ENCODE measurements at regions of chr9 and their contacts with region 1.

Region 1: GRCh38 chr9:4762108-4762885 is 21.3 kb upstream of the AK3 start:
- DNase-seq: peak in 9 of 10 donors; percentile 37 to 94 (median 75)

Region 2: DNA sequence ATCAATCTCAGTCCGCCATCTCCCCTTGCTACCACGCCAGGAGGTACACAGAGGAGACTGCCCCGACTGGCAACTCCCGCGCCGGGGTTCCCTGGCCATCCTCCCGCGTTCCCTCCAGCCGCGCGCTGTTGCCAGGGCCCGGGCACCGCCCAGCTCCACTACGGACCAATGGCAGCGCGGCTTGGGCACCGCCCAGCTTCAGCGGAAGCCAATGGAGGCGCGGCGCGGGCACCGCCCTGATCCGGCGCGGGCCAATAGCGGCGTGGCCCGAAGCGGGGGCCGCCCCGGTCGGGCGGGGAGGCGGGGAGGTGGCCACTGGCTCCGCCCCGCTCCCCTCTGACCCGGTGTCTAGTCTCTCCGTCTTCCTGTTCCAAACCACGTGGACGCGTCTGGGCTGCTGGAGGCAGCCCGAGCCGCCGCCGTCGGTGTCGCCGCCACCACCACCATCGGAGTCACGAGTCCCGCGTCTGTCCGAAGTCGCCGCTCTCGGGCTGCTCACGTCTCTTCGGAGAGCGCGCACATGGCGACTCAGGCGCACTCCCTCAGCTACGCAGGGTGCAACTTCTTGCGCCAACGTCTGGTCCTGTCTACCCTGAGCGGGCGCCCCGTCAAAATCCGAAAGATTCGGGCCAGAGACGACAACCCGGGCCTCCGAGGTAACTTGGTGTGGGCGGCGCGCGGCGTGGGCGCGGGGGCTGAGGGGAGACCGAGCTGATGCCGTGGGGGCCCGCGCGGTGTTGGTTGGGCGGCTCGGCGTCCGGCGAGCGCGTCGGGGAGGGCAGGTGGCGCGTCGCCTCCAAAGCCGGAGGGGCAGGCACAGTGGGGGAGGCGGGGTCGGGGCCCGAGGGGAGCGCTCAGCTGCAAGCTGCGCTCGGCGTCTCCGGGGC is 30.5 kb after region 1 on chr9 and contains the start of gene RCL1:
- intact Hi-C with region 1: loop called (anchors 5 kb)
- DNase-seq: peak; percentile 95 to 100 (median 98)

Region 3: GRCh38 chr9:4923580-4924544 is 161.6 kb after region 1 on chr9:
- intact Hi-C with region 1: loop called (anchors 2 kb)
- DNase-seq: no peak

Region 4: GRCh38 chr9:4994166-4994890 is 232.0 kb after region 1 on chr9:
- intact Hi-C with region 1: no loop called
- DNase-seq: no peak

Region 5: DNA sequence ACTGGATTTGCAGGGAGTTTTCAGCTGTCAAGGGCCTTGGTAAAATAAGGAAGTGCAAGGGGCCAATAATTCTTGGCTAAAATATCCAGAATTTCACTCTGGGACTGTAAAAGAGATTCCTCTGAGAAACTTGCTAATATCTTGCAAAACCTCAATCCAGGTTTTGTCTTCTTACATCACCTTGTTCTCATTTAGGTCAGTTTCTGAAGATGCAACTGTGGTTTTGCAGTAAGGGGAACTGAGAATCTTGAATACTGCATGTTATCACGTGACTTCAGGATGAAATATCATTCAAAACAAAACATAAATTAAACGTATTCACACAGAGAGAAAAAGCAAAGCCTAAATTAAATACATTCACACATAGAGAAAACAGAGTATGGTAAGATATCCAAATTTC is 831.6 kb after region 1 on chr9:
- intact Hi-C with region 1: loop called (anchors 5 kb)
- DNase-seq: no peak